ENCODE measurements at regions of chr6 and their contacts with region 1.

Region 1: DNA sequence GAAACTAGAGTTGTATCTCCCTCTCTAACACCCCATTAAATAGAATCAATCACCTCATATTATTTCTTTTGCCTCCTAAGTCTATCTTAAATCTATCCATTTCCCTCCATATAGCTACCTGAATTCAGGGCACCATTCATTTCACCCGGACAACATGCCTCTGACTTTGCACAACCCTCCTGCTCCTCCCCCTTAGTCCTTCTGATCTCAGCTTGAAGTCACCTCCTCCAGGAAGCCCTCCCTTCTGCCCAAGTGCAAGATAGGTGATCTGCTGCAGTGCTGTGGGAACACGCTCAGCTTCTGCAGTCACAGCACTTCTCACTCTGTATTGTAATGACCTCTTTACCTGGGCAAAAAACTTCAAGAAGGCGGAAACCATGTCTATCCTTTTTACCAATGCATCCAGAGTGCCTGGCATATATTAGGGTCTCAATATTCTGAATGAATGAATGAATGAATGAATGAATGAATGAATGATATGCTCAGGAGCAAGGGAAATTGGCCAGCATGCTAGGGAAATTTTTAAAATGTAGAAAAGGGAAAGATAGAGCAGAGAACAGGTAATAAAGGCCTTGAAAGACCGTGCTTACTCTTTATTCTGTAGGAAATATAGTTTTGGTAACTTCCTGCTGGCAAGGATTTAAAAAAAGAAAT is 41.7 kb downstream of the MBOAT1 start:
- DNase-seq: no peak
- H3K4me3 ChIP-seq: no peak overlapping the region
- H3K27ac ChIP-seq: no peak overlapping the region
- H3K4me1 ChIP-seq: no peaks in the 10 kb centered on the region
- H3K27me3 ChIP-seq: no peaks in the 10 kb centered on the region
- CTCF ChIP-seq: no peak

Region 2: GRCh38 chr6:20191992-20192391 is 21.4 kb after region 1 on chr6:
- CTCF ChIA-PET with region 1: no interaction called
- POLR2A ChIA-PET with region 1: no interaction called
- intact Hi-C with region 1: loop called (anchors 1 kb)
- DNase-seq: no peak
- H3K4me3 ChIP-seq: no peak overlapping the region
- H3K27ac ChIP-seq: no peak overlapping the region
- H3K4me1 ChIP-seq: no peaks in the 10 kb centered on the region
- H3K27me3 ChIP-seq: no peaks in the 10 kb centered on the region
- CTCF ChIP-seq: no peak

Region 3: GRCh38 chr6:20610636-20611370 is 440.2 kb after region 1 on chr6:
- CTCF ChIA-PET with region 1: no interaction called
- POLR2A ChIA-PET with region 1: no interaction called
- intact Hi-C with region 1: no loop called
- DNase-seq: no peak
- H3K4me3 ChIP-seq: no peak overlapping the region
- H3K27ac ChIP-seq: no peak overlapping the region
- H3K4me1 ChIP-seq: no peaks in the 10 kb centered on the region
- H3K27me3 ChIP-seq: no peaks in the 10 kb centered on the region
- CTCF ChIP-seq: no peak